ENCODE measurements at regions of chr4 and their contacts with region 1.

Region 1: DNA sequence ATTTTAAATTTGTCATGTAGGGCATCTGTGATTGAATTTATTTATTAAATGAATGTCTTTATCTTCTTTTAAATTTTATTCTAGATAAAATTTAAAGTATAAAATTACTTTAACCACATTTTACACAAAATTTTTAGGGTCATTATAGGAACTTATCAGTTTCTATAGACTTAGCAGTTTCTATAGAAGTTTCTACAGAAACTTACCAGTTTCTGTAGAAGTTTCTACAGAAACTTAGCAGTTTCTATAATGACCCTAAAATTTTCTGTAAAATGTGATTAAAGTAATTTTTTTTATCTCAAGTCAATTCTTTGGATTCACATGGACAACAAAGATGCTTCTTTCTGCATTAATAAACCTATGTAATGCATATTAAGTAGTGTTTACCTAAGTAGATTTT is 565.9 kb upstream of the TECRL start:
- DNase-seq: no peak
- H3K27ac ChIP-seq: no peak overlapping the region
- CTCF ChIP-seq: no peak

Region 2: GRCh38 chr4:64889906-64890615 is 85.1 kb before region 1 on chr4:
- CTCF ChIA-PET with region 1: no interaction called
- POLR2A ChIA-PET with region 1: no interaction called
- DNase-seq: no peak
- H3K27ac ChIP-seq: no peak overlapping the region
- CTCF ChIP-seq: no peak

Region 3: DNA sequence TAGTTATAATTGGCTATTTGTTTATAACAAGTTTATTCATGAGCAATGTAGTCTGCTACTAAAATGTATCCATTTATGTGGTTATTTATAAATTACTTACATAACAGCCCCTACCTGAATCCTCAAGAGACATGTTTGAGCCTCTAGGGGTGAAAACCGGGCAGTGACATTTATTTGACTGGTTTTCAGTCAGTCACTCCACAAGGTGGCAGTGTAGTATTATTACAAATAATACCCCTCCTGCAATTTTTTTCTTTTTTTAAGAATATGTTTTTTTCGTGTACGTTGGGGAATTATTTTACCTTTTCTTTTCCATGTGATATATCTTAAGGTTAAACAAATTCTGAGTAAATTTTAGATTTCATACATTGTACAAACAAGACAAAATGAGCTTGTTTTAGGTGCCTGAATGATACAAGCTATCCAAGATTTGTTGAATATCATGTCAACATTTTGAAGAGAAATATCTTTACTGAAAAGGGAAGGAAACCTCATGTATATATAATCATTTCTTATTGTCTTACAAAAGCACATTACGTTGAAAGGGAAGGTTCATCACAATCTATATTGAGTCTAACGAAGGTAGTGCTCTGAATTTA is 32.8 kb after region 1 on chr4:
- CTCF ChIA-PET with region 1: interaction called, 10 read pairs
- POLR2A ChIA-PET with region 1: no interaction called
- DNase-seq: peak; percentile 54
- H3K27ac ChIP-seq: no peak overlapping the region
- CTCF ChIP-seq: peak; percentile 74

Measured in RWPE1 (cell line).